Right ventricle myocardium inferior (tissue), 1 donor: ENCODE measurements at regions of chr2 and their contacts with region 1.

Region 1: GRCh38 chr2:30394096-30394495 is 53.0 kb upstream of the LCLAT1 start:
- DNase-seq: no peak
- ATAC-seq: no peak

Region 2: DNA sequence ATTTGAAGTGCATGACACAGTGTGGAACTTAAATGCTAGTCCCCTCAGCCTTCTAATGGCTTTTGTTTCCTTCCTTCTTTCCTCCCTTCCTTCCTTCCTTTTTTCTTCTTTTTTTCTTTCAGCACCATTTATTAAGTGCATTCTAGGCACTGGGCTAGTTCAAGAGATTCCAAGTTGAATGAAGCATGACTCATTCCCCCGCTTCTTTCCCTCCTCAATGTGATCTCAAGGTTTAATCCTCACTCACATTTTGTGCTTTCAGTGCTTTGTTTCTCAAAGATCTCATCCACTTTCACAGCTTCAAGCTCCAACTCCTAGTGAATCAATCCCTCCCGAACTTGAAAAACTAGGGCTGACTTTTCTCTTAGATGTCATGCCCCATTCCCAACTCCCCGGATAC is 72.6 kb before region 1 on chr2:
- intact Hi-C with region 1: loop called (anchors 5 kb)
- DNase-seq: no peak
- ATAC-seq: no peak